ENCODE measurements at regions of chr18 and their contacts with region 1.

Region 1: GRCh38 chr18:59308248-59308937 is 10.1 kb downstream of the CPLX4 start:
- DNase-seq: no peak
- H3K4me3 ChIP-seq: peak overlapping the region; percentile 34
- H3K27me3 ChIP-seq: peaks cover 26% of the 10 kb centered on the region
- CTCF ChIP-seq: peak; percentile 77

Region 2: GRCh38 chr18:59155153-59155552 is 153.2 kb before region 1 on chr18:
- CTCF ChIA-PET with region 1: no interaction called
- POLR2A ChIA-PET with region 1: no interaction called
- DNase-seq: peak; percentile 82
- H3K4me3 ChIP-seq: no peak overlapping the region
- H3K27me3 ChIP-seq: no peaks in the 10 kb centered on the region
- CTCF ChIP-seq: no peak

Region 3: DNA sequence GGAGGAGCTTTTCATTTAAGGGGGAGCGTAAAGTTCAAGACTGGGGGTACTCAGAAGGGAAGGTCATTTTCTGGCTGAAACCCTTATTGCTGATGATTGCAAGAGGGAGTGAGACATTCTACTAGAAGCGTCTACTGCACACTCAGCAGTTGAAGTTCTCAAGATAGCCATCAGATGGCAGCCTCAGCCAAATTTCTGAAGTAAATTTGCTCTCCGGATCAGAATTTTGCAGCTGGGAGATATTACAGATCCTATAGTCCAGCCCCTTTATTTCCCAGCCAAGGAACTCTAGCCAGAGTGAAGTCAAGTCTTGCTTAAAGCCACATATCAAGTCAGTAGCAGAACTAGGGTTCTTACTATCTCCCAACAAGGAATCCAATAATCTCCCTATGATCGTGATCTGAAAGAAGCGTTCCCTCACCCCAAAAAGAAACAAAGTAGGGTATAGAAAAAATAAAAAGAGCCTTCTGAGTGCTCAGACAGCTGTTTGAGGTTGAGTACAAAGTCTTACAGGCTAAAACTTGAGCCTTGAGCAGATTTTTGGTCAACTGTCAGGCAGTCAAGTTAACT is 59.1 kb before region 1 on chr18:
- CTCF ChIA-PET with region 1: interaction called, 26 read pairs
- POLR2A ChIA-PET with region 1: no interaction called
- DNase-seq: peak; percentile 47
- H3K4me3 ChIP-seq: no peak overlapping the region
- H3K27me3 ChIP-seq: peaks cover 5% of the 10 kb centered on the region; the same call in 1 of the 2 replicates
- CTCF ChIP-seq: peak; percentile 83

Region 4: GRCh38 chr18:59318460-59319050 is 10.2 kb after region 1 on chr18 and contains the start of gene CPLX4:
- CTCF ChIA-PET with region 1: interaction called, 36 read pairs
- POLR2A ChIA-PET with region 1: no interaction called
- DNase-seq: no peak
- H3K4me3 ChIP-seq: no peak within 1 kb of the TSS
- H3K27me3 ChIP-seq: no peaks in the 10 kb centered on the region; the same call in 1 of the 2 replicates
- CTCF ChIP-seq: no peak
- polyA plus RNA-seq, gene CPLX4: not detected in 2 replicates

Region 5: DNA sequence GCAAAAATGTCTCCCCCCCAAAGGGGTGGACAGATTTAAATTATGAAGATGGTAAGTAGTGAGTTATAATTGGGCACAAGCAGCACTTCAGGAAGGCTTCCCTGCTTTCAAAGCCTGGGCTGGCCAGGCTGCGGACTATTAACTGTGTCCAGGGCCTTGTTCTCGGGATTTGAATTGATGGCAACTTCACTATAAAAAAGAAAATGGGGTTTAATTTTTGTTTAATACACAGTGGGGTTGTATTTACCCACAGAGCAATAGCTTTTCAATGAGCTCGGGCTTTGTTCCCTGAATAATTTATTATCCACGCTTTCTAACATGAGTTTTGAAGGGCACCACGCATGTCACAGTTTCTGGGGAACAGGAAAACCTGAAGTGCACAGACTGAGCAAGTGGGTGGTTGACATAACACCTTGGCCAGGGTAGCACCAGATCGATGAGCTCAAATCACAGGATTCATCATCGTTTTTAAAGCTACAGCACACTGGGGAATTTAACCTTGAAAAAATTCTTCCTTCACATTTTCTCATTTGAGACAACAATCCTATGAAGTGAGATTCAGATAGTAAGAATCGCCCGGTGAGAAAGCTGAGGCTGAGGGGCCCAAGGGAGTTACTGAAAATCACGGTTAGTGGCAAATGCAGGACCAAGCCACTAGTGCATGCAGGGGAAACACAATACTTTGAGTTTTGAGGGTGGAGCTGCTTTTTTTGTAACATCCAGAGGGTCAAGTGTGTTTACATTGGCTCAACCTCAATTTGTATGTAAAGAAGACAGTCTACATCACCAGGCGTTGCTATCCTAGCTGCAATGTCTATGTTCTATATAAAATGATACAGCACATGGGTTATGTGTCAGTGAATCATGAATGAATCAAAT is 79.5 kb after region 1 on chr18:
- CTCF ChIA-PET with region 1: interaction called, 4 read pairs
- POLR2A ChIA-PET with region 1: interaction called, 13 read pairs
- DNase-seq: no peak
- H3K4me3 ChIP-seq: no peak overlapping the region
- H3K27me3 ChIP-seq: no peaks in the 10 kb centered on the region
- CTCF ChIP-seq: no peak

Measured in BJ (cell line).